Caco-2 (cell line): ENCODE measurements at regions of chr10 and their contacts with region 1.

Region 1: GRCh38 chr10:116287906-116288501 is 15.0 kb upstream of the GFRA1 start:
- DNase-seq: peak; percentile 40 to 62
- H3K4me3 ChIP-seq: no peak overlapping the region
- H3K4me3 Mint-ChIP-seq: no peak overlapping the region
- H3K27ac Mint-ChIP-seq: no peak overlapping the region
- H3K4me1 ChIP-seq: no peaks in the 10 kb centered on the region
- H3K4me1 Mint-ChIP-seq: no peaks in the 10 kb centered on the region
- H3K27me3 ChIP-seq: no peaks in the 10 kb centered on the region
- H3K27me3 Mint-ChIP-seq: peaks cover 3% of the 10 kb centered on the region
- CTCF ChIP-seq: peak; percentile 65 to 81

Region 2: DNA sequence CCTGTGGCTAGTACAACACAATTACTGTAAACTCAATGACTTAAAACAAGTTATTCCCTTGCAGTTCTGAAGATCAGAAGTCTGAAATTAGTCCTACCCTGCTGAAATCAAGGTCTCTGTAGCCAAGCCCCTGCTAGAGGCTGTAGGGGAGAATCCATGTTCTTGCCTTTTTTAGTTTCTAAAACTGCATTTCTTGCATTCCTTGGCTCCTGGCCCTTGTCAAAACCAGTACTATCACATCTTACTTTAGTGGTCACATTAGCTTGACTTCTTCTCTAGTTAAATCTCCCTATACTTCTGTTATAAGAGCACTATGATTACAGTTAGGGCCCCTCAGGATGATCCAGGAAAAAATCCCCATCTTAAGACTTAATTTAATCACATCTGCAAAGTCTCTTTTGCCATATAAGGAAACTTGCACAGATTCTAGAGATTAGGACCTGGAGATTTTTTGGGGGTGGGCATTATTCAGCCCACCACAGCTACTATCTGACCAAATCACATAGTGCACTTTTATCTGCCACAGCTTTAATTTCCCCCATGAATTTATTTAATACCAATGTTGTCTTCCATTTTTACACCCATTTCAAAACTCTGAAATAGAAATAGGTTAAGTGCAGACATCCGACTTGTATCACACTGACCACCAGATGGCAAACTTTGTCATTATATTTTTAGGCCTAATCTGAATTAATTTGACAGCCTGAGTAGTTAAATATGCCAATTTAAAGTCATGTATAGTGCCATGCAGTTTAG is 581.8 kb before region 1 on chr10:
- CTCF ChIA-PET with region 1: interaction called, 6 read pairs
- POLR2A ChIA-PET with region 1: no interaction called
- intact Hi-C with region 1: loop called (anchors 1 kb)
- DNase-seq: peak in 1 of 2 experiments; percentile 13
- H3K4me3 ChIP-seq: no peak overlapping the region
- H3K4me3 Mint-ChIP-seq: no peak overlapping the region
- H3K27ac Mint-ChIP-seq: no peak overlapping the region
- H3K4me1 ChIP-seq: no peaks in the 10 kb centered on the region
- H3K4me1 Mint-ChIP-seq: no peaks in the 10 kb centered on the region
- H3K27me3 ChIP-seq: no peaks in the 10 kb centered on the region
- H3K27me3 Mint-ChIP-seq: peaks cover 10% of the 10 kb centered on the region
- CTCF ChIP-seq: peak; percentile 33 to 48

Region 3: DNA sequence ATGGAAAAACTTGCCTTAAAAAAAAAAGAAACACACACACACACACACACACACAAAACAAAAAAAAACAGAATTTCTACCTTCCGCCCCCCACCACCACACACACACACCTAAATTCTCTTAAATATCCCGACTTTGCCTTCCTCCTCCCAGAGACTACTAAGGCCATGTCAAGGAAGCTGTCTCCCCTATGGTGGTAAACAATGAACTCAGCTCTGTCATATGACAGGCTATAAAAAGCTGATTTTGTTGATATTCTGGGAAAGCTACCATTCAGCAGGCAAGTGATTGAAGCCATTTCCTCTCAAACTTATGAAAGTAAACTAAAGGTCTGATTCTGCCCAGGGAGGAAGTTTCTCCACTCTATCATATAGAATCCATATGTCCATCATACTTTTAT is 486.0 kb before region 1 on chr10:
- CTCF ChIA-PET with region 1: no interaction called
- POLR2A ChIA-PET with region 1: no interaction called
- intact Hi-C with region 1: loop called (anchors 1 kb)
- DNase-seq: no peak
- H3K4me3 ChIP-seq: no peak overlapping the region
- H3K4me3 Mint-ChIP-seq: no peak overlapping the region
- H3K27ac Mint-ChIP-seq: no peak overlapping the region
- H3K4me1 ChIP-seq: no peaks in the 10 kb centered on the region
- H3K4me1 Mint-ChIP-seq: no peaks in the 10 kb centered on the region
- H3K27me3 ChIP-seq: no peaks in the 10 kb centered on the region; the same call in 1 of the 2 replicates
- H3K27me3 Mint-ChIP-seq: peaks cover 9% of the 10 kb centered on the region
- CTCF ChIP-seq: no peak

Region 4: DNA sequence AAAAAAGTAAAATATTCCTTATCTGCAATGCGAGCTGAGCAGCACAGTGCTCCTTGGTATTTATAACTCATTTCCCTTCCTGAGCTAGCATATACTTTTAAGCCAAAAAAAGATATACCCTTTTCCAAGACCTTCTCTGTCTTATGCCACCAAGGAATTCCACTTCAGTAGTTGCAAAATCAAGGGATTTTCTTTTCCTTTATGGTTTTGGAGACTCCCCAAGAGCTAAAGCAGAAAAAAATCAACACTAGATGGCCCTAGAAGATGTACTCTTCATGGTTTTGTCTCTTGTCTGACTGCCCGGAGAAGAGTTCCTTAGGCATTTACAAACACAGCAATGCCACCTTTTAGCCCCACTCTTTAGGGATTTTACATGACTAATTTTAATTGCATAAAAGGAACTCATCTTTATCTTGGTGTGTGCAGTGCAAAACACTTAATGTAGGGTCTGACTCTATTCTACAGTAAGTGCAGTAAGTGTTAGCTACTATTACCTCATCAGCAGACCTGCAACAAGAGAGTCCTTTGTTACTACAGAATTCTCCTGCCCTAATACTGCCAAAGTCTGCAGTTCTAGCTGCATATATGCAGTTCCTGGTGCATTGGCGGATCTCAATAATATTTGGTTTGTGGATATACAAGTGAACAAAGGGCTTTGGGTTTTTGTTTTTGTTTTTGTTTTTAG is 458.3 kb before region 1 on chr10:
- CTCF ChIA-PET with region 1: no interaction called
- POLR2A ChIA-PET with region 1: no interaction called
- intact Hi-C with region 1: loop called (anchors 1 kb)
- DNase-seq: peak in 1 of 2 experiments; percentile 9
- H3K4me3 ChIP-seq: no peak overlapping the region
- H3K4me3 Mint-ChIP-seq: no peak overlapping the region
- H3K27ac Mint-ChIP-seq: no peak overlapping the region
- H3K4me1 ChIP-seq: no peaks in the 10 kb centered on the region
- H3K4me1 Mint-ChIP-seq: no peaks in the 10 kb centered on the region
- H3K27me3 ChIP-seq: no peaks in the 10 kb centered on the region; the same call in 1 of the 2 replicates
- H3K27me3 Mint-ChIP-seq: no peaks in the 10 kb centered on the region
- CTCF ChIP-seq: peak in 1 of 2 experiments; percentile 17